ENCODE measurements at regions of chr1 and their contacts with region 1.

Region 1: GRCh38 chr1:224458996-224459395 is 24.4 kb upstream of the WDR26 start:
- DNase-seq: no peak
- H3K4me3 ChIP-seq: no peak overlapping the region
- H3K27ac ChIP-seq: no peak overlapping the region
- H3K4me1 ChIP-seq: peaks cover 4 to 8% of the 10 kb centered on the region in 2 experiments; a peak in 2 of 4 replicates
- H3K27me3 ChIP-seq: no peaks in the 10 kb centered on the region
- CTCF ChIP-seq: no peak
- EP300 ChIP-seq: no peak
- RAD21 ChIP-seq: no peak

Region 2: GRCh38 chr1:224433701-224434672 is 25.0 kb before region 1 on chr1:
- CTCF ChIA-PET with region 1: interaction called, 11 read pairs
- POLR2A ChIA-PET with region 1: no interaction called
- DNase-seq: peak; percentile 87
- H3K4me3 ChIP-seq: peak overlapping the region; percentile 67 to 99
- H3K27ac ChIP-seq: peak overlapping the region; percentile 81 to 85
- H3K4me1 ChIP-seq: peaks cover 19 to 48% of the 10 kb centered on the region in 2 experiments; a peak in 3 of 4 replicates
- H3K27me3 ChIP-seq: no peaks in the 10 kb centered on the region
- CTCF ChIP-seq: no peak
- EP300 ChIP-seq: no peak
- RAD21 ChIP-seq: no peak

Region 3: GRCh38 chr1:224447251-224447650 is 11.7 kb before region 1 on chr1:
- CTCF ChIA-PET with region 1: interaction called, 37 read pairs
- POLR2A ChIA-PET with region 1: no interaction called
- DNase-seq: no peak
- H3K4me3 ChIP-seq: no peak overlapping the region
- H3K27ac ChIP-seq: peak overlapping the region in 1 of 2 experiments; percentile 13; a peak in 1 of 4 replicates
- H3K4me1 ChIP-seq: 0 out of 4 replicates have a peak, but pooled peaks cover 0 to 7% of the 10 kb centered on the region in 2 experiments
- H3K27me3 ChIP-seq: no peaks in the 10 kb centered on the region
- CTCF ChIP-seq: no peak
- EP300 ChIP-seq: no peak
- RAD21 ChIP-seq: no peak

Region 4: DNA sequence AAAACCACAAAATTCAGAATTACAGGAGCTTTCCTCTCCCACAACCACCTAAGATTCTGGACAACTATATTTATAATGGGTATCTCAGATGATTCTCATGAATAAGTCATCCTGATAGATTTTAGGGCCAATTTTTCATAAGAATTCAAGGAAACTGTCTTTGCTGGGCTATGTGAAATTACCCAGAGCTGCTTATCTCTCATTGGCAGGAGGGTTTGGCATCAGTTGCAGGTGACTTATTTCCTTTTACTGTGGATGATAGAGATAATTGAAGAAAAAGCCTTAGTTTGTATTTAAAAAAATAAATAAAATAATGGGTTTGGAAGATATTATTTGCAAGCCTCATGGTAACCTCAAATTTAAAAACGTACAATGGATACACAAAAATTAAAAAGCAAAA is 13.8 kb after region 1 on chr1:
- CTCF ChIA-PET with region 1: interaction called, 14 read pairs
- POLR2A ChIA-PET with region 1: no interaction called
- DNase-seq: no peak
- H3K4me3 ChIP-seq: no peak overlapping the region
- H3K27ac ChIP-seq: no peak overlapping the region
- H3K4me1 ChIP-seq: no peaks in the 10 kb centered on the region
- H3K27me3 ChIP-seq: no peaks in the 10 kb centered on the region
- CTCF ChIP-seq: no peak
- EP300 ChIP-seq: no peak
- RAD21 ChIP-seq: no peak

Region 5: DNA sequence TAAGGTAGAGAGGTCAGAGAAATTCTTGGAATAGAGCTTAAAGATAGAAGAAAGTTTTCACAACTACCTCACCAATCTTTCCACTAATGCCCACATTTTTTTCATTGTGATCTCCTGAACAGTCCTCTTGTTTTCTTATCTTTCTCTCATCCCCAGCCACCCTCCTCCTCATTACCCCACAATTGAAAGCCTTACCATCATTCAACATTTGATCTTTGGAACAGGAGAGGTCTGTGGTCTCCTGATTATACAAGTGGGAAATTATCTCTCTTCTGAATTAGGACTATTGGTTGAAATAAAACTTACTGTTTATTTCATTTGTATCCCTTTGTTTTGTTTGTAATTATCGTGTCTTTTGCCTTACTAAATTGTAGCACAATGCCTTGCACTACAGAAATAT is 500.1 kb after region 1 on chr1:
- CTCF ChIA-PET with region 1: no interaction called
- POLR2A ChIA-PET with region 1: no interaction called
- DNase-seq: no peak
- H3K4me3 ChIP-seq: no peak overlapping the region
- H3K27ac ChIP-seq: no peak overlapping the region
- H3K4me1 ChIP-seq: no peaks in the 10 kb centered on the region
- H3K27me3 ChIP-seq: no peaks in the 10 kb centered on the region
- CTCF ChIP-seq: no peak
- EP300 ChIP-seq: no peak
- RAD21 ChIP-seq: no peak